ENCODE measurements at regions of chr18 and their contacts with region 1.

Region 1: DNA sequence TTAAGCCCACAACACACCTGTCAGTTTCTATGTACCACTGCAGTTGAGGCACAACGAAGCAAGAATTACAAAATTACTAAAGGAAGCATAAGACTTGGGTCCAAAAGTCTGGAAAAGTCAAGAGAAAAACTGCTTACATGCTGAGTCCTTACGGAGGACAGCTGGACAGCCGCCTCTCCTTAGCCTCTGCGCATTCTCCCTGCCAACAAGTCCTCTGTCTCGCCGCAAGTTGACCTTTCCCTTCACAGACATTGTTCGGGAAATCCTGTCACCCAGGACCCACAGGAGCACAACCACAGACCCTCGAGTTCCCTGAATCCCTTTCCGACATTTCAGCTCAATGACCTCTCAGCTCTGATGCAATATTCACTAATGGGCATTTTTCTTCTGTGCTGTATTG is 525.4 kb upstream of the SALL3 start:
- DNase-seq: no peak
- H3K4me3 ChIP-seq: no peak overlapping the region
- H3K27ac ChIP-seq: no peak overlapping the region
- H3K4me1 ChIP-seq: no peaks in the 10 kb centered on the region
- CTCF ChIP-seq: no peak

Region 2: DNA sequence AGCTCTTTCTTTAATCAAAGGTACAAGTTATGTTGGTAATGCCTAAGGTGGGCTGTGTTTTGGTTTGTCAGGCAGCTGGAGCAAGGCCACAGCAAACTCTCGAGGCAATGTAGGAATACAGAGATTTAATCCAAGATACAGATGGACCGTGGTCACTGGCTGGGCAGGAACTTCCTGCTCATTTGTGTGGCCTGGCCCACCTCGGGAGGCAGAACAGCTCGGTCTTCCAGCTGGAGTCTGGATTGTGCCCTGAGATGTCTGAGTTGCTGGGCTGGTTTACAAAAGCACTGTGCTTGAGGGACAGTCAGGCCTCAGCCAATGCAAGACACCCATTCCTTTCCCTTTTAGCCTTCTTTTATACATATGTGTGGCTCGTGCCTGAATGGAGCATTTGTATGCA is 19.3 kb after region 1 on chr18:
- CTCF ChIA-PET with region 1: interaction called, 11 read pairs
- POLR2A ChIA-PET with region 1: no interaction called
- intact Hi-C with region 1: no loop called
- DNase-seq: no peak
- H3K4me3 ChIP-seq: no peak overlapping the region
- H3K27ac ChIP-seq: no peak overlapping the region
- H3K4me1 ChIP-seq: no peaks in the 10 kb centered on the region
- CTCF ChIP-seq: no peak

Measured in OCI-LY7 (cell line).